ENCODE measurements at regions of chr1 and their contacts with region 1.

Region 1: DNA sequence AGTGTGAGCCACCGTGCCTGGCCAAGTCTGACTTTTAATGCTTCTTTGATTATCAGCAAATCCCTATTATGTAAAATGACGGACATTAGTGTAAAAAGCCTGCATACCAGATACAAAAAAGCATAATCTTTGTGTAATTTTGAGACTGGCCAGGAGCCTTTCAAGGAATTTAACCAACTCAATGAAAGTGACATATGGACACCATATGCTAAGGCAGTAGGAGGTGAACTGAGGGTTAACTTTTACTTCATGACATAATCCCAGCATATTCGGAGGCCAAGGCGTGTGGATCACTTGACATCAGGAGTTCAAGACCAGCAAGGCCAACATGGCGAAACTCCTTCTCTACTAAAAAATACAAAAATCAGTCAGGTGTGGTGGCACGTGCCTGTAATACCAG is 94.6 kb downstream of the EIF4G3 start:
- DNase-seq: no peak

Region 2: DNA sequence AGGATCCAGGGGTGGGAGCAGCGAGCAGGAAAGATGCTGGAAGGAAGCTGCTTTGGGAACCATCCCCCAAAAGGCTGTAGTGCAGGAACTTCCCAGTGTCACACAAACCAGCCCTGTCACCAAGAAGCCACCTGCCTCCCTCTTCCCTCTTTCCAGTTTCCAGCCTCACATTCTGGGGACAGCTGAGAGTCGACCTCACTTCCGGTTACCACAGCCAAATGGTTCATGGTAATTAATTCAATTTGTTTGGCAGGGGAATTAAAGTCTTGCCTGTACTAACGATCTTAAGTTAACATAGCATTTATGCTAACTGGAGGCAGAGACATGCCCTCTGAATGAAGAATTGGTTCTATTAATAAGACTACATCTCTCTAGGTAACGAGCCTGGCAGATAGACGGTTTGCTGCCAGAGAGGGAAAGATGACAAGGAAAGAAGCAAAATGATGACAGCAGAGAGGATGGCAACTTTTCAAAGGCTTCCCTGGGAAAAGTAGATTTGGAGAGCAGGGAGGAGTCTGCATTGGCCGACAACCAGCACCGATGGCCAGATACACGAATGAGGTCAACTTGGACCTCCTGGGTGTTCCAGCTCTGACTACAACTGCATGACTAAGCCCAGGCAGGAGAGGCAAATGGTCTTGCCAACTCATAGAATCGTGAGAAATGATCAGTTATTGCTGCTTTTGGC is 1346.5 kb before region 1 on chr1:
- intact Hi-C with region 1: no loop called
- DNase-seq: peak; percentile 91

Region 3: DNA sequence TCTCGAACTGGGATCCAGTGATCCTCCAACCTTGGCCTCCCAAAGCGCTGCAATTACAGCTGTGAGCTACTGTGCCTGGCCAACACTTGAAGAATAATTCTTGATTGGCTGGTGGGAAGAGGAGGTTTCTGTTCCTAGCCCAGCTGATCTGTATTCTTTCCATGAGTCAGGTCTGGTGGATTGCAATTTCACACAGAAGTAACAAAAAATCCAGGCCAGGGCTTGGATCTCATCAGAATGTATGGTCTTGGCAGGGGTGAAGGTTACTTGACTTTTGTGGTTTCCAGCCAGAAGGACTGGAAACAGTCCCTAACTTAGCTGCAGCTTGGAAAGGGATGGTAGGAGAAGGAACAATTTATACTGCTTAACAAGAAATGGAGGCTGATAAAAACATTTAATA is 289.9 kb before region 1 on chr1:
- intact Hi-C with region 1: loop called in 1 of 2 experiments (anchors 5 kb)
- DNase-seq: no peak

Region 4: GRCh38 chr1:21165646-21166045 is 83.6 kb after region 1 on chr1:
- intact Hi-C with region 1: loop called in 1 of 2 experiments (anchors 10 kb)
- DNase-seq: no peak